HCT116 (cell line): ENCODE measurements at regions of chr6 and their contacts with region 1.

Region 1: DNA sequence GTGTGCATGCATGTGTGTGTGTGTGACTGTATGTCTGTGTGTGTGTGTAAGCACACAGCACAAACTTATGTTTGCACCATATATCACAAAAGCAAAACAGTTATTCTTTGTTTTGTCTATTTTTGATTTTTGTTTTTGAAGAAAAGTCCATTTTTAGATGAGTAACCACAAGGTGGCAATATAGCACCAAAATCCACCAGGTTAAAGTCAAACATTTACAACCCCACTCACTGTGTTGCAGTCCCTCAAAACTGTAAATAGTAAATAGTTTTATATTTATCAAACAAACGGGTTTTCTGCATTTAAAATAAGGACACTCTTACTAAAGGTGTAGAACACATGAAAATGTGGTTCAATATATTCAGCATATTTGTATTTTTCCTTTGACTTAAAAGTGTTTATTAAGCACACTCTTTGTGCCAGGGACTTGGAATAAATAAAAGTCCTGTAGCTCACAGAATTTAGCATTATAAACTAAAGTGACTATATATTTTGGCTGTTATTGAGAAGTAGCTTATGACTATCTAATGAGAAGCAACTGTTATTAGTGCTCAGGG is 118.5 kb downstream of the GFRAL start:
- DNase-seq: peak; percentile 8
- ATAC-seq: no peak; the same call in 1 of the 2 replicates
- H3K4me3 ChIP-seq: no peak overlapping the region
- H3K27ac ChIP-seq: no peak overlapping the region
- H3K4me1 ChIP-seq: no peaks in the 10 kb centered on the region
- H3K27me3 ChIP-seq: peaks cover 32% of the 10 kb centered on the region
- CTCF ChIP-seq: peak; percentile 35 to 68 (median 50); a peak in 4 of 6 replicates
- POLR2A ChIP-seq: no peak
- RAD21 ChIP-seq: peak; percentile 73

Region 2: DNA sequence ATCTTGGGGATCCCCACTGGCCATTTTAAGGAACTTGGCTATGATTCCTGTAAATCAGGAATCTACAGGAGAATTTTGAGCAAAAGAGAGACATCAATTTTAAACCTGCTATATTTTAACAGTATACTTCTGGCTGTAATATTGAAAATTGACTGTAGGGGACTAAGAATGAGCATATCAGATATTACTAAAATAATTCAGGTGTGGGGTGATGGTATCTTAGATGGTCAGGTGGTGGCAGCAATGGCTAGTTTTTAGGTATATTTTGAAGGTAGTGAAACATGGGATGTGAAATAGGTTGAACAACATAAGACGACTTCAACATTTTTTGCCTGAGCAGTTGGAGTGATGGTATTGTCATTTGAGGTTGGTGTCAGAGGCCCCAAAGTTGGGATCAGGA is 567.1 kb before region 1 on chr6:
- CTCF ChIA-PET with region 1: no interaction called
- POLR2A ChIA-PET with region 1: no interaction called
- RAD21 ChIA-PET with region 1: no interaction called
- intact Hi-C with region 1: loop called (anchors 10 kb)
- DNase-seq: no peak
- ATAC-seq: peak; percentile 62
- H3K4me3 ChIP-seq: no peak overlapping the region
- H3K27ac ChIP-seq: peak overlapping the region; percentile 17
- H3K4me1 ChIP-seq: peaks cover 50 to 90% of the 10 kb centered on the region in 2 experiments
- H3K27me3 ChIP-seq: no peaks in the 10 kb centered on the region
- CTCF ChIP-seq: peak; percentile 28 to 63 (median 60); a peak in 4 of 6 replicates
- POLR2A ChIP-seq: no peak
- RAD21 ChIP-seq: peak; percentile 75

Region 3: DNA sequence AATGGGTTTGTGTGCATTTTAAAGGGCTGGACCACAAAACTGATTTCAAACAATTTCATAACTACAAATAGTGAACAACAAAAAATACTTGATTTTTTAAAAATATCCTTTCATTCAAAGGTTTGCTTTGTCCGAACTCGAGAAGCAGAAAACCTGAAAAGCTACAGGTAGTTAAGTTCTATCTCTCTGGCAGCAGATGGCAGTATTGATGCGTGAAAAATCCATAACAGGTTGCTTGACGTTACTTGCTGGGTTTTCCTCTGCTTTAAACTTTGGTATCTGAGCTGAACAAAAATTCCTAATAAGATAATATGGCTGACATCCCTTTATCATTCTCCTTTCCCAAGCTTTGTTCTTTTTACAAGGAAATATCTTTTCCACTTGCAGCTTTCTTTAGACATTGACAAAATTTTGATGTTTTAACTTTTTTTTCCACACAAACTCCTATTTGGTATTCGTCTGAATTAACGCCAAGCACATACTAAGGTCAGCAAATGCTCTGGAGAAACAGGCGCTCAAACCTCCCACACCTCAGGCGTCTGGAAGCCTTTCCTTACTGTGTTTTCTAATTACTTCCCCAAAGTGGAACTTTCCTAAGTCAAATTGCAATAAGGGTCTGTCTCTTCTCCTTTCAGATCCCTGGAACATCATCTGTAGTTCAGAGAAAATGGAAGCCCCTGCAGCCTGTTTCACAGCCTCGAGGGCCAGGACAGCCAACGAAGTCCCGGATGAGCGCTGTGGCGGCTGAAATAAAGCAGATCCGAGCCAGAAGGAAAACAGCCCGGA is 168.8 kb before region 1 on chr6:
- CTCF ChIA-PET with region 1: interaction called, 29 read pairs
- POLR2A ChIA-PET with region 1: no interaction called
- RAD21 ChIA-PET with region 1: no interaction called
- intact Hi-C with region 1: no loop called
- DNase-seq: peak; percentile 58
- ATAC-seq: peak; percentile 75
- H3K4me3 ChIP-seq: no peak overlapping the region
- H3K27ac ChIP-seq: no peak overlapping the region
- H3K4me1 ChIP-seq: 0 out of 4 replicates have a peak, but pooled peaks cover 0 to 4% of the 10 kb centered on the region in 2 experiments
- H3K27me3 ChIP-seq: 0 out of 2 replicates have a peak, but pooled peaks cover 4% of the 10 kb centered on the region
- CTCF ChIP-seq: peak; percentile 58 to 69 (median 59); a peak in 5 of 6 replicates
- POLR2A ChIP-seq: no peak
- RAD21 ChIP-seq: peak; percentile 77

Region 4: GRCh38 chr6:55734261-55734660 is 288.5 kb after region 1 on chr6:
- CTCF ChIA-PET with region 1: no interaction called
- POLR2A ChIA-PET with region 1: no interaction called
- RAD21 ChIA-PET with region 1: no interaction called
- intact Hi-C with region 1: no loop called
- DNase-seq: no peak
- ATAC-seq: no peak
- H3K4me3 ChIP-seq: no peak overlapping the region
- H3K27ac ChIP-seq: no peak overlapping the region
- H3K4me1 ChIP-seq: no peaks in the 10 kb centered on the region
- H3K27me3 ChIP-seq: peaks cover 10% of the 10 kb centered on the region
- CTCF ChIP-seq: no peak
- POLR2A ChIP-seq: no peak
- RAD21 ChIP-seq: no peak

Region 5: DNA sequence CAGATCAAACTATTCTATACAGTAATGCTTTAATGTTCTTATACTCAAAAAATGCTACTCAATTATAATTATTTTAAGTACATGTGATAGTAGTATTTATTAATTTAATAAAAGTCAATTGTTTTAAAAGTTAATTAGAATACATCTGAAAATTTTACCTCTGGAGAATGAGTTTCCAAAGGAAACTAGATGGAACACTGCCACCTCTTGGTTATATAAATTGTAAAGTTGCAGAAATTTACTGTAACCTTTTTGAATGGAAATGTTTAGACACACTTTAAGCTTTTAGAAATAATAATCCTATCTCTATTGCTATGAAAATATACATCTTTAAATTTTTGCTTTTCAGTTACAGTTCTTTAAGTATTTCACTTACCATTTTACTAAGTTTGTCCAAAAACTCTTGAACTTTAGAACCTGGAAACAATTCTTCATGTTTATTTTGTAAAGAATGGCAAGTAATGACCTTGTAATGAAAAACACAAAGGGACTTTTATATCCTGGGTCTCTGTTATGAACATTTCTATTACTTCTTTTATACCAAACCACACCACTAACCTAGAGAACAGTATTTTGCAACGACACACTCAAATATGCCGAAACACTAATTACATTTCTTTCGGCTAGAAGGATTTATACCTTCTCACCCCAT is 440.6 kb after region 1 on chr6:
- CTCF ChIA-PET with region 1: interaction called, 21 read pairs
- POLR2A ChIA-PET with region 1: no interaction called
- RAD21 ChIA-PET with region 1: no interaction called
- intact Hi-C with region 1: loop called (anchors 2 kb)
- DNase-seq: peak; percentile 3
- ATAC-seq: no peak
- H3K4me3 ChIP-seq: no peak overlapping the region
- H3K27ac ChIP-seq: no peak overlapping the region
- H3K4me1 ChIP-seq: no peaks in the 10 kb centered on the region
- H3K27me3 ChIP-seq: 0 out of 2 replicates have a peak, but pooled peaks cover 16% of the 10 kb centered on the region
- CTCF ChIP-seq: peak; percentile 23 to 47 (median 44); a peak in 3 of 6 replicates
- POLR2A ChIP-seq: no peak
- RAD21 ChIP-seq: peak; percentile 57

Region 6: GRCh38 chr6:55941702-55942101 is 496.0 kb after region 1 on chr6:
- CTCF ChIA-PET with region 1: interaction called, 32 read pairs
- POLR2A ChIA-PET with region 1: no interaction called
- RAD21 ChIA-PET with region 1: no interaction called
- intact Hi-C with region 1: no loop called
- DNase-seq: no peak
- ATAC-seq: peak; percentile 44; the same call in 1 of the 2 replicates
- H3K4me3 ChIP-seq: no peak overlapping the region
- H3K27ac ChIP-seq: no peak overlapping the region
- H3K4me1 ChIP-seq: no peaks in the 10 kb centered on the region
- H3K27me3 ChIP-seq: peaks cover 19% of the 10 kb centered on the region
- CTCF ChIP-seq: peak in 2 of 3 experiments; percentile 15 to 19; a peak in 2 of 6 replicates
- POLR2A ChIP-seq: no peak
- RAD21 ChIP-seq: peak; percentile 42; the same call in 1 of the 2 replicates

Region 7: GRCh38 chr6:55953335-55953734 is 507.6 kb after region 1 on chr6:
- CTCF ChIA-PET with region 1: interaction called, 33 read pairs
- POLR2A ChIA-PET with region 1: no interaction called
- RAD21 ChIA-PET with region 1: no interaction called
- intact Hi-C with region 1: loop called (anchors 1 kb)
- DNase-seq: peak; percentile 15
- ATAC-seq: peak; percentile 47; the same call in 1 of the 2 replicates
- H3K4me3 ChIP-seq: no peak overlapping the region
- H3K27ac ChIP-seq: no peak overlapping the region
- H3K4me1 ChIP-seq: no peaks in the 10 kb centered on the region
- H3K27me3 ChIP-seq: no peaks in the 10 kb centered on the region
- CTCF ChIP-seq: peak; percentile 13 to 42 (median 35); a peak in 4 of 6 replicates
- POLR2A ChIP-seq: no peak
- RAD21 ChIP-seq: peak; percentile 69

Region 8: GRCh38 chr6:56021943-56022342 is 576.2 kb after region 1 on chr6:
- CTCF ChIA-PET with region 1: no interaction called
- POLR2A ChIA-PET with region 1: no interaction called
- RAD21 ChIA-PET with region 1: no interaction called
- intact Hi-C with region 1: no loop called
- DNase-seq: no peak
- ATAC-seq: no peak
- H3K4me3 ChIP-seq: no peak overlapping the region
- H3K27ac ChIP-seq: no peak overlapping the region
- H3K4me1 ChIP-seq: no peaks in the 10 kb centered on the region
- H3K27me3 ChIP-seq: no peaks in the 10 kb centered on the region
- CTCF ChIP-seq: no peak
- POLR2A ChIP-seq: no peak
- RAD21 ChIP-seq: no peak

Region 9: DNA sequence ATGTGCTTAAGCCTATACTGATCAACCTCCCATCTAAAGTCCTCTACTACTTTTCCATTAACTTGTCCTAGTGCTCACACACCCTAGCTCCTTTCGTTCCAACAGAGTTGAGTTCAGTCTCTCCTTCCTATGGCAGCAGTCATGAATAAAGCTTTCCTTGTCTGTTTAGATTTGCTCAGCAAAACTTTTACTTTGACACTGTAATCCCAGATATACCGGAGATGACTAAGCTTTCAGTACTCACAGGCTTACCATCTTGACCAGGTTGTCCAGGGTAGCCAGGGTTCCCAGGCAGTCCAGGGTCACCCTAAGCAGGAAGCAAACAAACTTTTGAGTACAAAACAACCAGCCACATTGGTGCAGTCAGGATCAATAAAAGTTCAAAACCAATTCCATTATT is 710.9 kb after region 1 on chr6:
- CTCF ChIA-PET with region 1: no interaction called
- POLR2A ChIA-PET with region 1: no interaction called
- RAD21 ChIA-PET with region 1: no interaction called
- intact Hi-C with region 1: no loop called
- DNase-seq: no peak
- ATAC-seq: no peak
- H3K4me3 ChIP-seq: no peak overlapping the region
- H3K27ac ChIP-seq: no peak overlapping the region
- H3K4me1 ChIP-seq: no peaks in the 10 kb centered on the region
- H3K27me3 ChIP-seq: no peaks in the 10 kb centered on the region
- CTCF ChIP-seq: no peak
- POLR2A ChIP-seq: no peak
- RAD21 ChIP-seq: no peak

Region 10: GRCh38 chr6:56292505-56293181 is 846.9 kb after region 1 on chr6:
- CTCF ChIA-PET with region 1: interaction called, 25 read pairs
- POLR2A ChIA-PET with region 1: no interaction called
- RAD21 ChIA-PET with region 1: no interaction called
- intact Hi-C with region 1: loop called (anchors 1 kb)
- DNase-seq: peak; percentile 53
- ATAC-seq: peak; percentile 86
- H3K4me3 ChIP-seq: no peak overlapping the region
- H3K27ac ChIP-seq: no peak overlapping the region
- H3K4me1 ChIP-seq: peaks cover 0 to 5% of the 10 kb centered on the region in 2 experiments; a peak in 2 of 4 replicates
- H3K27me3 ChIP-seq: no peaks in the 10 kb centered on the region
- CTCF ChIP-seq: peak; percentile 50 to 80 (median 74); a peak in 5 of 6 replicates
- POLR2A ChIP-seq: no peak
- RAD21 ChIP-seq: peak; percentile 91